Endothelial cell of umbilical vein (primary cell): ENCODE measurements at regions of chr2 and their contacts with region 1.

Region 1: DNA sequence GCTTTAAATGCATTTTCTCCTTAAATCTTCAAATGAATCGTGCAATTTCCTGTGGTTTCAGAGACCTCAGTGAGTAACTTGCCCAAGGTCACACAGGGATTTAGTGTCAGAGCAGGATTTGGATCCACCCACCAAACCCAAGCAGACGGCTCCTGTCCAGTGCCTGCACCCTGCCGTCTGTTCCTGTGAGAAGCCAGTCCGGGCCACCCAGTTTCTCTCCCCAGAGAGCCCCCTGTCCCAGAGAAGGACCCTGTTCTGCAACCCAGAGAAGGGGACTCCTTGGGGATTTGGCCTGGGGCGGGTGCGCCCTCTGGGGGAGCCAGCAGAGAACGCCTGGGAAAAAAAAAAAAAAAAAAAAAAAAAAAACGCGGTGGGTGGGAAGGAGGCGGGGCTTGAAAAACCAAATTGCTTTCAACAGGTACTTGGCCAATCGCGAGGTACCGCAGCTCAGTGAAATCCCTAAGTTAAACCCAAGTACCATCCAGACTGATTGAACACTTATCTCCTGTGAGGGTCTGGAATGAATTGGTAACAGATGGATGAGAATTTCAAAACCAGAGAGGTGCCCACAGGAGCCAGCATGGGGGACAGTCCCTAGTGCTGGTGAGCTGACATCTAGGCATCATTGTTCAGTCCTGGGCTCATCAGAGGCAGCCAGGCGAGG is 30.9 kb upstream of the REEP1 start:
- DNase-seq: peak; percentile 57
- H3K4me3 ChIP-seq: no peak overlapping the region
- H3K27ac ChIP-seq: no peak overlapping the region
- H3K4me1 ChIP-seq: peaks cover 3% of the 10 kb centered on the region
- H3K27me3 ChIP-seq: peaks cover 2 to 4% of the 10 kb centered on the region in 2 experiments
- CTCF ChIP-seq: peak; percentile 50 to 70
- POLR2A ChIP-seq: no peak

Region 2: DNA sequence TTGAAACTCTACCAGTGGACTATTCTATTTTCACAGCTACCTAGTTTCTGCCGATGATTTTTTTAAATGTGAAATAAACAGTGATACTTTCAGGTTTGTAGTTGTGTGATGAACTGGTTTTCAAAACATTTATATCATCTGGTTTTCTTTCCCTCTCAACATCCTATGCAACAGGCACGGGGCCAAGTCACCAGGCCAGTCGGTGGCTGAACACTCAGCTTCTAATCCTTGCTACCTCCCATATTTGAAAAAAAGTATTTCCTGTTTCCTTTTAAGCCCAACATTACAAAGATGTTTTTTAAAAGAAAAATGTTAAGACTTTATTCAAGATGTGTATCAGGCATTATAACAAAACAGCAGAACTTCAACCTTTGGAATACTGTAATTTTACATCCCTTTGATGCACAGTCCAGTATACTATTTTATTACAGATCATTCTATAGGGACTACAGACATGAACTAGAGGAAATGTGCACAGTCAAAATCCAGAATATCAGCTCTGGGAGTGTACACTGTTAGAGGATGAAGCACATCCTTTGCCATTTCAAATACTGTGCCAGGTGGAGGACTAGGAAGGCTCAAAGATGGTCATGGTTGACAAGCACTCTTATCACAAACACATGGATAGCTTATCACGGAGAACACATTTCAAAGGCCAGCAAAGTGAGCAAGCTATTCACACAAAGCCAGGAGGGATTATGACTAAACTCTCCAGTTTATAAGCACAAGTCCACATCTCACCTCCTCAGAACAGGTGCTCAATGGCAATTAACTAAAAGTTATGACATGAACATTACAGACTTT is 154.4 kb before region 1 on chr2:
- CTCF ChIA-PET with region 1: interaction called, 14 read pairs
- POLR2A ChIA-PET with region 1: no interaction called
- dilution Hi-C with region 1: no loop called
- intact Hi-C with region 1: no loop called
- DNase-seq: peak; percentile 84
- H3K4me3 ChIP-seq: no peak overlapping the region
- H3K27ac ChIP-seq: no peak overlapping the region
- H3K4me1 ChIP-seq: peaks cover 14% of the 10 kb centered on the region
- H3K27me3 ChIP-seq: no peaks in the 10 kb centered on the region
- CTCF ChIP-seq: no peak
- POLR2A ChIP-seq: no peak

Region 3: DNA sequence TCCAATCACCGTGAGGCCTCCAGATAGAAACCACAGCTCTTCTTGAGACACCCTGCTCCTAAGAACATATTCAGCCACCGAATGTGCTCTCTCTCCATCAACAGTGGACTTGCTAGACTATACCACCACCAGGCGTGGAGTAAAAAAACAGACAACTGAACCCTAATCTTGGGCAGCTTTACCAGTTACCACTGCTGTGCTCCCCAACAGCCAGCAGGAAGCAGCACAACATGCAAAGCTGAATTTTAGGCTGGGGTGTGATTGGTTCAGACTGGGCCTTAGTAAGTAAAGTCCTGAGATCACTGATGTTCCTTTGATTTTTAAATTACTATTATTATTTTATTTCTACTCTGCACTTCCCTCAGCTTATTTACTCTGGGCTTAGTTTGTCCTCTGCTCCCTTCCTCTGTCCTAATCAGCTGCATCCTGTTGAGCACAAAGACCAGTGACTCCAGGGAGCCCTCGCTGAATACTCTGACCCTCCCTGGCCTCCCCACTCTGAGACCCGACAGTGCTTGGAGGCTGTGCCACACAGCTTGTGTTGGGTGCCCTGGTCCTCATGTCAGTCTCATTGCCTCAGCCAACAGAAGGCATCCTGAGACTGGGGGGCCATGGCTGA is 147.1 kb before region 1 on chr2:
- CTCF ChIA-PET with region 1: interaction called, 92 read pairs
- POLR2A ChIA-PET with region 1: no interaction called
- dilution Hi-C with region 1: no loop called
- intact Hi-C with region 1: loop called (anchors 1 kb)
- DNase-seq: peak; percentile 68
- H3K4me3 ChIP-seq: no peak overlapping the region
- H3K27ac ChIP-seq: no peak overlapping the region
- H3K4me1 ChIP-seq: peaks cover 7% of the 10 kb centered on the region
- H3K27me3 ChIP-seq: no peaks in the 10 kb centered on the region
- CTCF ChIP-seq: peak; percentile 85 to 92
- POLR2A ChIP-seq: no peak

Region 4: DNA sequence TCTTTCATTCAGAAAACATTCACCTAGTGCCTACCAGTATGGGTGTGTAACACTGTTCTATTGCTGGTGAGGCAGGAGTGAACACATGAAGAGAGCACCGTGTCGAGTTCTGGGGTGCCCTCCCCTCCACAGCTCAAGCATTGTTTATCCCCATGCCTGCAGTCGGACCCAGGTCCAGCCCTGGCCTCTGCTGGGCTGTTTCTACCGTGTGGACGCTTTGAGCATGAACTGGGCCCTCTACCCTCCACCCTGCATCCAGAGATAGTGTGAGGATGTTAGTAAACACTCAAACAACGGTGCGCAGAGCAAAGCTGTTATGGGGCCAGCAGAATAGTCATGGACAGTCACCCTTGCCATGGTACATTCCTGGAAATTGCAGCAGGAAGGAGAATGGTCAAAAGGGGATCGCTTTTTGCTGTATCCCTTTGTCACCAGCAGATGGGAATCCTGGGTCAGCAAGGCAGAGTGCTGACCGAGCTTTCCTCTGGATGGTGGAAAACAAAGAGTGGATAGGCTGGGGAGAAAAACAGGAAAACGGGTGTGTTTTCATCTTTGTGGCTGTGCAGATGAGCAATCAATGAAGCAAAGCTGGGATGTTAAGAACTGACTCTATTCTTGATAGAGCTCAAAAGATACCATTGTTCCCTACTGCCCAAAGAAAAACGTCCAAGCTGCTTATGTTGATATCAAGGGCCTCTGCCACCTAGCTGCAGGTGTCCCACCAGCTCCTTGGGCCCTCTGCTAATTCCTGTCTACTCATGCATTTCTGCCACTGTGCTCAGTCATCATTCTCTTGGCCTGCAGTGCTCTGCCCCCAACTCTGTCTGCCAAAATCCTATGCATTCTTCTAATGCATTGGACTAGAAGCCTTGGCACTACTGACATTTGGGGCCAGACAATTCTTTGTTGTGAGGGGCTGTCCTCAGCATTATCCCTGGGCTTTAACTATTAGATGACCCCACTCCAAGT is 69.6 kb before region 1 on chr2:
- CTCF ChIA-PET with region 1: interaction called, 18 read pairs
- POLR2A ChIA-PET with region 1: no interaction called
- dilution Hi-C with region 1: no loop called
- intact Hi-C with region 1: loop called (anchors 5 kb)
- DNase-seq: peak; percentile 74
- H3K4me3 ChIP-seq: no peak overlapping the region
- H3K27ac ChIP-seq: no peak overlapping the region
- H3K4me1 ChIP-seq: no peaks in the 10 kb centered on the region
- H3K27me3 ChIP-seq: peaks cover 2 to 11% of the 10 kb centered on the region in 2 experiments
- CTCF ChIP-seq: peak in 1 of 2 donors; percentile 20
- POLR2A ChIP-seq: no peak

Region 5: DNA sequence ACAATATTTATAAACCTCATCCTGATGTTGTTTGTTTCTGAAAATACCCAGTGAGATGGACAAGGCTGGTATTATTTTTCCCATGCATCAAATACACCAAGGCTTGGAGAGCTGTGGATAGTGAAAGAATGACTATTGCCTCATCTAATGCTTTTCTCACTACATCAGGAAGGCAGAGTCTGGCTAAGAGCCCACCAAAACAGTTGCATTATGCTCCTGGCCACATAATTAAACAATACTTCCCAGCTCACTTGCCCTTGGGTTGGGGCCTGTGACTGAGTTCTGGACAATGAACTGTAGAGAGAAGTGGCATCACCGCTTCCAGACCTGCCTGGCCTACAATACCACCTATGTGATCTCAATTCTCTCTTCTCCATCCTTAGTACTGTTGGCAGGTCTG is 15.6 kb after region 1 on chr2:
- CTCF ChIA-PET with region 1: interaction called, 17 read pairs
- POLR2A ChIA-PET with region 1: no interaction called
- dilution Hi-C with region 1: no loop called
- intact Hi-C with region 1: no loop called
- DNase-seq: peak; percentile 83
- H3K4me3 ChIP-seq: no peak overlapping the region
- H3K27ac ChIP-seq: no peak overlapping the region
- H3K4me1 ChIP-seq: no peaks in the 10 kb centered on the region
- H3K27me3 ChIP-seq: peaks cover 0 to 3% of the 10 kb centered on the region in 2 experiments
- CTCF ChIP-seq: no peak
- POLR2A ChIP-seq: no peak

Region 6: DNA sequence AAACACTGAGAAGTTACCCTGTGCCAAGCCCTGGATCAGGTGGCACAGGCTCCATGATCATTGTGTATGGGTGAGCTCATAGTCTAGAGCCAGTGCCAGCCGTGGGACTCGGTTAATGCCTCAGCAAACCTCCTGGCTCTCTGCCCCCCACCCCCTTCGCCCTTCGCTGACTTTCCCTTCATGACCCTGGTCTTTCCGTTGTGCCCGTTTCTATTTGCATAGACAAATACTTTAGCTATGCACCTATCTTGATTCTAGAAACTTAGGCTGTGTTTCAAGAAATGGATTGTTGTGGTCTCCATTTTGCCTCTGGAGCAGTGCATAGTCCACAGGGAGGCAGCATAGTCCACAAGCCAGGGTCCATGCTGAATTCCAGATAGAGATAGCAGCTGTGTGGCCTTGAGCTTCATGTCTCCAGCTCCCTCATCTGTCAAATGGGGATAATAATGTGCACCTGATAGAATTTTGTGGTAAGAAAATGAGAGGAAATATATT is 28.0 kb after region 1 on chr2:
- CTCF ChIA-PET with region 1: interaction called, 11 read pairs
- POLR2A ChIA-PET with region 1: no interaction called
- dilution Hi-C with region 1: no loop called
- intact Hi-C with region 1: no loop called
- DNase-seq: peak; percentile 24
- H3K4me3 ChIP-seq: no peak overlapping the region
- H3K27ac ChIP-seq: no peak overlapping the region
- H3K4me1 ChIP-seq: no peaks in the 10 kb centered on the region
- H3K27me3 ChIP-seq: peaks cover 0 to 3% of the 10 kb centered on the region in 2 experiments
- CTCF ChIP-seq: peak; percentile 9 to 32
- POLR2A ChIP-seq: no peak

Region 7: DNA sequence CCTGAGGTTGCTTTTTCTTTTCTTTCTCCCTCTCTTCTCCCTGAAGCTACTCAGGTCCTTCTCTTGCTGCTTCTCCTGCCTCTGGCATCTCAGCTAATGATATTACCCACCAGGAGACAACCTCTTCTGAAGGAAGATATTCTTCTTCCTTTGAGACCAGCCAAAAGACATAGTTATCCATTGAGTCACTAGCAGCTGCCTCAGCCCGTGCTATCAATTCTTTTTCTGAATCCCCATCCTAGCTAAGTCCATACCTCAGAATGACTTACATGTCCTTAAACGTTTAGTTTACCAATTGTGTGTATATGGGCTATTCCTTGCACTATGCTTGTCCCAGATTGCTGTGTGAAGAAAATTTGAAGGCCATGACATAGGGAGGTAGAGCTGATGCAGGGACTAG is 280.4 kb after region 1 on chr2:
- CTCF ChIA-PET with region 1: no interaction called
- POLR2A ChIA-PET with region 1: no interaction called
- dilution Hi-C with region 1: no loop called
- intact Hi-C with region 1: no loop called
- DNase-seq: no peak
- H3K4me3 ChIP-seq: no peak overlapping the region
- H3K27ac ChIP-seq: no peak overlapping the region
- H3K4me1 ChIP-seq: no peaks in the 10 kb centered on the region
- H3K27me3 ChIP-seq: no peaks in the 10 kb centered on the region
- CTCF ChIP-seq: no peak
- POLR2A ChIP-seq: no peak